Cardiac septum (tissue), 1 donor: ENCODE measurements at regions of chr17 and their contacts with region 1.

Region 1: GRCh38 chr17:8156246-8156992 is 4.2 kb upstream of the PER1 start:
- DNase-seq: peak; percentile 100

Region 2: GRCh38 chr17:8118769-8119580 is 37.4 kb before region 1 on chr17:
- intact Hi-C with region 1: loop called (anchors 2 kb)
- DNase-seq: peak; percentile 93

Region 3: GRCh38 chr17:8138672-8139371 is 17.6 kb before region 1 on chr17:
- intact Hi-C with region 1: loop called (anchors 1 kb)
- DNase-seq: peak; percentile 96